Left cardiac atrium (tissue), 4 donors: ENCODE measurements at regions of chr12 and their contacts with region 1.

Region 1: DNA sequence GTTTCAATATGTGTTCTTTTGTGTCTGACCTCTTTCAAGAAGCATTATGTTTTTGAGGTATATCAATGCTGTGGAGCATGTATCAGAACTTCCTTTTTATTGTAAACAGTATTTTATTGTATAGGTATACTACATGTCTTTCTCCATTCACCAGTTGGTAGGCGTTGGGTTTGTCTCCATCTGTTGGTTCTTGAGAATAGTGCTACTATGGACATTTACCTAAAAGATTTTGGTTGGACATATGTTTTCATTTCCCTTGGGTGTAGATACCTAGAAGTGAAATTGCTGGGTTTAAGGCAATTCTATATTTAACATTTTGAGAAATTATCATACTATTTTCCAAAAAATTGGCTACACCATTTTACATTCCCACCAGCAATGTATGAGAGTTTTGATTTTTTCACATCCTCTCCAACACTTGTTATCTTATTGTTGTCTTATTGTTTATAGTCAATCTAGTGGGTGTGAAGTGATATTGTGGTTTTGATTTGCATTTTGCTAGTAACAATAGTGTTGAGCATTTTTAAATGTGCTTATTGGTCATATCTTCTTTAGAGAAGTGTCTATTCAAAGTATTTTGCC is 409.2 kb downstream of the IPO8 start:
- DNase-seq: no peak
- ATAC-seq: no peak

Region 2: GRCh38 chr12:29519585-29520182 is 766.8 kb before region 1 on chr12:
- intact Hi-C with region 1: loop called in 1 of 2 experiments (anchors 10 kb)
- DNase-seq: peak; percentile 31
- ATAC-seq: no peak